ENCODE measurements at regions of chr19 and their contacts with region 1.

Region 1: DNA sequence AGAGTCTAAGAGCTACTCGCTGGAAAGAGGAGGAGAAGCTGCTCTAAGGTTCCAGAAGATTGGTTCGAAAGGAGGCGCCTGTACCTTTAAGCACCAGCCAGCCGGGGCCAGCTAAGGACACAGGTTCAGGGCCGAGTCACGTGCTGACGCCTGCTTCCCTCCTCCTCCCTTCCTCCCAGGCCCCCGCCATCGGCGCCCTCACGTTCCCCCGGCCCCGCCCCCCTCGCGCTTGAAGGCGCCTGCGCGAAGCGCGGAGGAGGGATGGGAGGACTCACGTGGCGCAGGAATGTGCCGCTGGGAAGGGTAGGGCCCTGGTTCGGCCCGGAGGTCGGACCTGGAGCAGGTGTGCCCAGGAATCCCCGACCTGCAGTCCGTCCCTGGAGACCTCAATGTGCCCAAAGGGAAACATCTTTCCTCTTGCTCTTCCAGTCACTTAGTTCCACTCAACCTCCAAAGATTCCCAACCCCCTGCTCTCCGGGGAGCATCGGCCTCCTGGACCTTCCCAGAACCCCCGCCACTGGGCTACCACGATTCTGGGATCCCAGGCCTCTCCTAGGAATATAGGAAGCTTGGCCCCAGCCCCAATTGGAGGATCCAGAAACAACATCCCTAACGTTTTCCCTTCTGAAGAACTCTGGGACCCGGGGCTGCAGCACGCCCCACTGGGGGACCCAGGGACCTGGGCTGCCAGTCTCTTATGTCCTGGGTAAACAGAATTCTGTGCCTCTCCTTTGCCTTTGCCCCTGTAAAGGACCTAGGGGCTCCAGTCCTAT is 2.6 kb downstream of the DBP start:
- DNase-seq: peak; percentile 94
- H3K4me3 Mint-ChIP-seq: peak overlapping the region; percentile 74
- H3K27ac Mint-ChIP-seq: peak overlapping the region; percentile 90
- H3K4me1 Mint-ChIP-seq: peaks cover 61% of the 10 kb centered on the region
- H3K27me3 Mint-ChIP-seq: no peaks in the 10 kb centered on the region

Region 2: DNA sequence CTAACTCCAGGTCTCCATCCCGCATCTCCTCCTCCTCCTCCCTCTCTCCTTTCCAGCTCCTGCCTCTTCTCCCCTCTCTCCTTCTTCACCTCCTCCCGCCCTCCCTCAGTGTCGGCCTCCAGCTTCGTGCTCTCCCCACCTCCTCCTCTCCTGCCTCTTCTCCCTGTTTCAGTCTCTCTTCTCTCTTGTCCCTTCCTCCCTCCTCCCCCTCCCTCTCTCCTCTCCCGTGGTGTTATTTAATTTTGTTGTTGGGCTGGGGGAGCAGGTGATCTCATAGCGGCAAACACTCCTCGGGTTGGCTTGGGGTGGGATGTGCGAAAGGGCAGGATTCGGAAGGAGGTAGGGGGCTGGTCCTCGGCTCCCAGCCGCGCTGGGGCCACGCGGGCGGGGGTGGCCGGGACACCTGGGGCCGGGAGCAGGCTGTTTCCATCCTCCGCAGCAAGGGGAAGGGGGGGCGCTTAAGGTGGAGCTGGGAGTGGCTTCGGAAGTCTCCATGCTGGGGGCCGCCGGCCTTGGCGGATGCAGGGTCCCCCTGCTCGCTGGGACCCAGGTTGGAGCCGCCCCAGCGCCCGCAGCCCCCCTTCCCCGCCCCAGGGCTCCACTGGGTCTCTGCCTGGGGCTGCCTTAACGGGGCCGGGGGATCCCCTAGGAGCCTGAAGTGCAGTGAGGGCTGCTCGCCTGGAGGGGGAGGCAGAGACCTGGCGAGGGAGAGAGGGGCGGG is 11.6 kb after region 1 on chr19 and contains the start of gene CA11:
- CTCF ChIA-PET with region 1: interaction called, 10 read pairs
- POLR2A ChIA-PET with region 1: interaction called, 4 read pairs
- DNase-seq: peak; percentile 94
- H3K4me3 Mint-ChIP-seq: peak within 1 kb of the TSS; percentile 76
- H3K27ac Mint-ChIP-seq: peak within 1 kb of the TSS; percentile 89
- H3K4me1 Mint-ChIP-seq: peaks cover 49% of the 10 kb centered on the region
- H3K27me3 Mint-ChIP-seq: peaks cover 2% of the 10 kb centered on the region
- total RNA-seq, gene CA11: 10.1 to 10.8 TPM

Region 3: DNA sequence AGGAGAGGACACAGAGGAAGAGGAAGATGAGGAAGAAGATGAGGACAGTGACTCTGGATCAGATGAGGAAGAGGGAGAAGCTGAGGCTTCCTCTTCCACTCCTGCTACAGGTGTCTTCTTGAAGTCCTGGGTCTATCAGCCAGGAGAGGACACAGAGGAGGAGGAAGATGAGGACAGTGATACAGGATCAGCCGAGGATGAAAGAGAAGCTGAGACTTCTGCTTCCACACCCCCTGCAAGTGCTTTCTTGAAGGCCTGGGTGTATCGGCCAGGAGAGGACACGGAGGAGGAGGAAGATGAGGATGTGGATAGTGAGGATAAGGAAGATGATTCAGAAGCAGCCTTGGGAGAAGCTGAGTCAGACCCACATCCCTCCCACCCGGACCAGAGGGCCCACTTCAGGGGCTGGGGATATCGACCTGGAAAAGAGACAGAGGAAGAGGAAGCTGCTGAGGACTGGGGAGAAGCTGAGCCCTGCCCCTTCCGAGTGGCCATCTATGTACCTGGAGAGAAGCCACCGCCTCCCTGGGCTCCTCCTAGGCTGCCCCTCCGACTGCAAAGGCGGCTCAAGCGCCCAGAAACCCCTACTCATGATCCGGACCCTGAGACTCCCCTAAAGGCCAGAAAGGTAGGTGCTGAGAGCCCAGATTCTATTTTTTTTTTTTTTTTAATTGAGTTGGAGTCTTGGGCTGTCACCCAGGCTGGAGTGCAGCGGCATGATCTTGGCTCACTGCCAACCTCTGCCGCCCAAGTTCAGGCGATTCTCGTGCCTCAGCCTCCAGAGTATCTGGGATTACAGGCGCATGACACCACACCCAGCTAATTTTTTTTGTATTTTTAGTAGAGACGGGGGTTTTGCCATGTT is 239.9 kb after region 1 on chr19:
- CTCF ChIA-PET with region 1: no interaction called
- POLR2A ChIA-PET with region 1: no interaction called
- DNase-seq: peak; percentile 29
- H3K4me3 Mint-ChIP-seq: peak overlapping the region; percentile 98
- H3K27ac Mint-ChIP-seq: peak overlapping the region; percentile 98
- H3K4me1 Mint-ChIP-seq: peaks cover 54% of the 10 kb centered on the region
- H3K27me3 Mint-ChIP-seq: no peaks in the 10 kb centered on the region

Measured in activated CD4-positive, alpha-beta T cell treated with anti-CD3 and anti-CD28 coated beads, Interleukin-2, amount 10 ng/mL, durations not matched to agents 7 days and 5 days (primary cell).